CD8-positive, alpha-beta memory T cell (primary cell): ENCODE measurements at regions of chr1 and their contacts with region 1.

Region 1: GRCh38 chr1:33347650-33347992 is 26.7 kb upstream of the A3GALT2 start:
- DNase-seq: no peak
- H3K4me3 ChIP-seq: no peak overlapping the region
- H3K4me3 Mint-ChIP-seq: peak overlapping the region; percentile 52 to 98 (median 89)
- H3K27ac ChIP-seq: no peak overlapping the region
- H3K27ac Mint-ChIP-seq: peak overlapping the region in 3 of 8 donors; percentile 48 to 69 (median 66)
- H3K4me1 ChIP-seq: peaks cover 27% of the 10 kb centered on the region
- H3K4me1 Mint-ChIP-seq: peaks cover 54 to 70% (median 65%) of the 10 kb centered on the region in 3 donors
- H3K27me3 ChIP-seq: no peaks in the 10 kb centered on the region
- H3K27me3 Mint-ChIP-seq: peaks cover 0 to 4% of the 10 kb centered on the region in 2 donors

Region 2: DNA sequence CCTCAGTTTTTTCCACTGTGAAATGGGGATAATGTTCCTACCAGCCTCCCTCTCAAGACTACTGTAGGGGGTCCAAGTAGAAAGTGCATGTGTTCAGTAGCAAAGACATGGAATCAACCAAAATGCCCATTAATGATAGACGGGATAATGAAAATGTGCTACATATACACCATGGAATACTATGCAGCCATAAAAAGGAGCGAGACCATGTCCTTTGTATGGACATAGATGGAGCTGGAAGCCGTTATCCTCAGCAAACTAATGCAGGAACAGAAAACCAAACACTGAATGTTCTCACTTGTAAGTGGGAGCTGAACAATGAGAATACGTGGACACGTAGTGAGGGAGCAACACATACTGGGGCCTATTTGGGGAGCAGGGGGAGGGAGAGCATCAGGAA is 97.4 kb before region 1 on chr1:
- CTCF ChIA-PET with region 1: no interaction called
- POLR2A ChIA-PET with region 1: interaction called, 12 read pairs
- DNase-seq: no peak
- H3K4me3 ChIP-seq: no peak overlapping the region
- H3K4me3 Mint-ChIP-seq: peak overlapping the region in 1 of 7 donors; percentile 35
- H3K27ac ChIP-seq: no peak overlapping the region
- H3K27ac Mint-ChIP-seq: no peak overlapping the region
- H3K4me1 ChIP-seq: no peaks in the 10 kb centered on the region
- H3K4me1 Mint-ChIP-seq: no peaks in the 10 kb centered on the region
- H3K27me3 ChIP-seq: no peaks in the 10 kb centered on the region
- H3K27me3 Mint-ChIP-seq: peaks cover 5 to 30% of the 10 kb centered on the region in 2 donors

Region 3: DNA sequence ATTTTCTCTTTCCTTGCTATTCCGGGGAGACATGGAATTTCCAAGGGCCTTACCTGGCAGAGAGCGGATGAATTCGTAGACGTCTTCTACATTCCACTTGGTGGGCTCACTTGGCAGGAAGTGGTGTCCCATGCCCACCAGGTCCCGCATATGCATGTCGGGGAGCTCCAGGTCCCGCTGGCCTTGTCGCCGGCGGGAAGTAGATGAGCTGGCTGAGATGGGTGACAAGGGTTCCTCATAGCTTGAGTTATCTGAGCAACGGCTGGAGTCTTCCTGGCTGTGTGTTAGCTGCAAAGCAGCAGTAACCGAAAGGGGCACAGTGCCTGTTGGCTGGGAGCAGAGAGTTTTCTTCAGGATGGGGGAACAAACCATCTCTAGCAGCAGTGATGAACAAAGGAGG is 18.8 kb before region 1 on chr1:
- CTCF ChIA-PET with region 1: no interaction called
- POLR2A ChIA-PET with region 1: no interaction called
- DNase-seq: no peak
- H3K4me3 ChIP-seq: no peak overlapping the region
- H3K4me3 Mint-ChIP-seq: no peak overlapping the region
- H3K27ac ChIP-seq: no peak overlapping the region
- H3K27ac Mint-ChIP-seq: peak overlapping the region in 2 of 8 donors; percentile 12 to 18
- H3K4me1 ChIP-seq: no peaks in the 10 kb centered on the region
- H3K4me1 Mint-ChIP-seq: peaks cover 0 to 5% (median 0%) of the 10 kb centered on the region in 3 donors
- H3K27me3 ChIP-seq: no peaks in the 10 kb centered on the region
- H3K27me3 Mint-ChIP-seq: peaks cover 0 to 2% of the 10 kb centered on the region in 2 donors

Region 4: GRCh38 chr1:33586111-33586510 is 238.5 kb after region 1 on chr1:
- CTCF ChIA-PET with region 1: no interaction called
- POLR2A ChIA-PET with region 1: no interaction called
- DNase-seq: no peak
- H3K4me3 ChIP-seq: no peak overlapping the region
- H3K4me3 Mint-ChIP-seq: no peak overlapping the region
- H3K27ac ChIP-seq: no peak overlapping the region
- H3K27ac Mint-ChIP-seq: no peak overlapping the region
- H3K4me1 ChIP-seq: no peaks in the 10 kb centered on the region
- H3K4me1 Mint-ChIP-seq: no peaks in the 10 kb centered on the region
- H3K27me3 ChIP-seq: no peaks in the 10 kb centered on the region
- H3K27me3 Mint-ChIP-seq: peaks cover 0 to 5% of the 10 kb centered on the region in 2 donors